ENCODE measurements at regions of chr2 and their contacts with region 1.

Region 1: GRCh38 chr2:63189026-63189425 is 138.4 kb downstream of the OTX1 start:
- ATAC-seq: peak in 3 of 8 experiments; percentile 75 to 94 (median 93)
- H3K4me3 ChIP-seq: no peak overlapping the region
- H3K27ac ChIP-seq: no peak overlapping the region
- H3K4me1 ChIP-seq: no peaks in the 10 kb centered on the region

Region 2: GRCh38 chr2:62456721-62457539 is 732.1 kb before region 1 on chr2:
- in situ Hi-C with region 1: loop called in 1 of 9 experiments (anchors 25 kb)
- ATAC-seq: peak; percentile 91 to 99 (median 98)
- H3K4me3 ChIP-seq: peak overlapping the region; percentile 30 to 45 (median 39)
- H3K27ac ChIP-seq: no peak overlapping the region
- H3K4me1 ChIP-seq: peaks cover 0 to 4% of the 10 kb centered on the region in 2 donors

Region 3: GRCh38 chr2:62675062-62675461 is 514.0 kb before region 1 on chr2:
- in situ Hi-C with region 1: no loop called
- ATAC-seq: no peak
- H3K4me3 ChIP-seq: no peak overlapping the region
- H3K27ac ChIP-seq: no peak overlapping the region
- H3K4me1 ChIP-seq: peaks cover 1 to 3% of the 10 kb centered on the region in 2 donors

Region 4: DNA sequence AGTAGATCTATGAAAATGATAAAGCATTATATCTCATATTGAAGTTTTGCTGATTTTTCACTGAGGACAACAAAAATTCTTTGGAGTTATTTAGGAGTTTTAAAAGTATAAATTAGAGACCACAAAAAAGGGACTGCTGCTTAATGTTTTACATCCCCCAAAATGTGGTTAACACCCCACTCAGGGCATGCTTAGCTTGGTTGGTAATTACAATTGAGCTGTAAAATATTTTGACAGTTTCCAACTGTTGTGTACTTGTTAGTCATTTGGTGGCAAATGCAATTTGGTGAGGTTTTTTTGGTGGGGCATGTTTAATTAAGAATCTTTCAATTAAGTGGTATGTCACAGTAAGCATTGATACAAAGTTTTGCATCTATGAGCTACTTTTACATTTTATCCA is 275.7 kb before region 1 on chr2:
- in situ Hi-C with region 1: no loop called
- ATAC-seq: no peak
- H3K4me3 ChIP-seq: no peak overlapping the region
- H3K27ac ChIP-seq: no peak overlapping the region
- H3K4me1 ChIP-seq: no peaks in the 10 kb centered on the region

Measured in motor neuron (in vitro differentiated cells).